ENCODE measurements at regions of chr12 and their contacts with region 1.

Region 1: DNA sequence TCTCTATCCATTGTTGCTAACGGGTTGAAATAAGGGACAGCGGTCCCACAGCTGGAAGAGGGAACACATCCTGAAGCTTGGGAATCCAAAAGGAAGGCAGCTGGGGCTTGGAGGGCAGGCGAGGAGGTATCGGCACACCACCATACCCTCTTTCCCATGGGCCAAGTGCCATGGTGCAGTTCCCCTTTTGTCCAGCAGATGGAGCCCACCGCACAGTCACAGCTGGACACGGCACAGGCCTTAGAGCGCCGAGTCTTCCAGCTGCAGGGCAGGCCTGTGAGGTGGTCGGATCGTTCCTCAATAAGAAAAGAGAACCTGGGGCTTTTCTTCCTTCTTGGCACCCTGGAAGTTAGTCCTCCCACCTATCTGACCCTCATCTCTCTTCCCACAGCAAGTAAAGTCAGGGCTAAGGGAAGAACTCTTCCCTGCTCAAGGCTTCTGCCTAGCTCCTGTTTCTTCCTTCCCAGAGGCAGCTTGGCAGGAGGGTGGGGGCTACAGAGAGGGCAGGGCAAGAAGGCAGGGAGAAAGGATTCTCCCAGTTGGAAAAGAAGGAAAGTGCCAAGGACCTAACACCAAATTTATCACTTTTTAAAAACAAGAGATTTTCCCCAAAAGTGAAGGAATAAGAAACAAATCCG is 8.6 kb downstream of the PPP1R1A start:
- DNase-seq: peak; percentile 63 to 74 (median 68)
- H3K4me3 ChIP-seq: no peak overlapping the region
- H3K4me3 Mint-ChIP-seq: peak overlapping the region in 1 of 8 donors; percentile 44
- H3K27ac ChIP-seq: no peak overlapping the region
- H3K27ac Mint-ChIP-seq: no peak overlapping the region
- H3K4me1 ChIP-seq: peaks cover 7% of the 10 kb centered on the region
- H3K4me1 Mint-ChIP-seq: peaks cover 4 to 7% (median 5%) of the 10 kb centered on the region in 4 donors
- H3K27me3 ChIP-seq: no peaks in the 10 kb centered on the region
- H3K27me3 Mint-ChIP-seq: peaks cover 3 to 12% of the 10 kb centered on the region in 2 donors

Region 2: GRCh38 chr12:54444206-54444605 is 135.6 kb before region 1 on chr12:
- CTCF ChIA-PET with region 1: no interaction called
- POLR2A ChIA-PET with region 1: no interaction called
- intact Hi-C with region 1: no loop called
- DNase-seq: no peak
- H3K4me3 ChIP-seq: no peak overlapping the region
- H3K4me3 Mint-ChIP-seq: no peak overlapping the region
- H3K27ac ChIP-seq: no peak overlapping the region
- H3K27ac Mint-ChIP-seq: no peak overlapping the region
- H3K4me1 ChIP-seq: no peaks in the 10 kb centered on the region
- H3K4me1 Mint-ChIP-seq: peaks cover 3 to 4% (median 4%) of the 10 kb centered on the region in 4 donors
- H3K27me3 ChIP-seq: no peaks in the 10 kb centered on the region
- H3K27me3 Mint-ChIP-seq: peaks cover 0 to 2% of the 10 kb centered on the region in 2 donors

Region 3: DNA sequence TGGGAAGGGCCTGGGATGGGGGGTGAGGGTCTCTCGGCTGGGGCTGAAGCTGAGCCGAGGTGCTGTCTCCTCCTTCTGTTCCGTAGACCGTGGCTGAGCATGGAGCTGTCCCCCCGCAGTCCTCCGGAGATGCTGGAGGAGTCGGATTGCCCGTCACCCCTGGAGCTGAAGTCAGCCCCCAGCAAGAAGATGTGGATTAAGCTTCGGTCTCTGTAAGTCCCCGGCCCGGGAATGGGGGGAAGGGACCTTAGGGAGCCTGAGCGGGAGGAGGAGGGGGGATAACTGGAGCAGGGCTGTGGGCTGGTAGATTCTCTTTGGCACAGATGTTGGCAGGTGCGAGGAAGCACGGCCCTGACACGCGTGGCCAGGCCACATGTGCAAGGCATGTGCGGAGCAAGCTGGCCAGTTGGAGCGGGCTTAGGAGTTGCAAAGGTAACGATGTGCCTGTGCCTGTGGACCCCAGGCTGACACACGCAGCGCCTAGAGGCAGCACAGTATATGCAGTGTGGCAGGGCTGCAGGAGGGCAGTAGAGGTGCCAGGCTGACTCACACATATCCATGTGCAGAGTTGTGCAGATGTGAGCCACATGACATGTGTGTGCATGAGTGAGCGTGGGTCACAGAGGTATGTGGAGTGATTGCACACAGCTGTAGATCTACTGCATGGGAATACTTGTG is 29.9 kb before region 1 on chr12:
- CTCF ChIA-PET with region 1: no interaction called
- POLR2A ChIA-PET with region 1: no interaction called
- intact Hi-C with region 1: no loop called
- DNase-seq: no peak
- H3K4me3 ChIP-seq: peak overlapping the region in 1 of 2 donors; percentile 30
- H3K4me3 Mint-ChIP-seq: peak overlapping the region; percentile 80 to 95 (median 86)
- H3K27ac ChIP-seq: no peak overlapping the region
- H3K27ac Mint-ChIP-seq: peak overlapping the region in 5 of 7 donors; percentile 40 to 77 (median 49)
- H3K4me1 ChIP-seq: peaks cover 15% of the 10 kb centered on the region
- H3K4me1 Mint-ChIP-seq: peaks cover 7 to 35% (median 17%) of the 10 kb centered on the region in 4 donors
- H3K27me3 ChIP-seq: no peaks in the 10 kb centered on the region
- H3K27me3 Mint-ChIP-seq: peaks cover 0 to 2% of the 10 kb centered on the region in 2 donors

Region 4: GRCh38 chr12:54596526-54596946 is 16.7 kb after region 1 on chr12:
- CTCF ChIA-PET with region 1: interaction called, 64 read pairs
- POLR2A ChIA-PET with region 1: no interaction called
- intact Hi-C with region 1: no loop called
- DNase-seq: peak in 4 of 5 donors; percentile 21 to 29 (median 28)
- H3K4me3 ChIP-seq: no peak overlapping the region
- H3K4me3 Mint-ChIP-seq: no peak overlapping the region
- H3K27ac ChIP-seq: no peak overlapping the region
- H3K27ac Mint-ChIP-seq: no peak overlapping the region
- H3K4me1 ChIP-seq: no peaks in the 10 kb centered on the region
- H3K4me1 Mint-ChIP-seq: peaks cover 0 to 5% (median 1%) of the 10 kb centered on the region in 4 donors
- H3K27me3 ChIP-seq: no peaks in the 10 kb centered on the region
- H3K27me3 Mint-ChIP-seq: peaks cover 11 to 20% of the 10 kb centered on the region in 2 donors

Region 5: DNA sequence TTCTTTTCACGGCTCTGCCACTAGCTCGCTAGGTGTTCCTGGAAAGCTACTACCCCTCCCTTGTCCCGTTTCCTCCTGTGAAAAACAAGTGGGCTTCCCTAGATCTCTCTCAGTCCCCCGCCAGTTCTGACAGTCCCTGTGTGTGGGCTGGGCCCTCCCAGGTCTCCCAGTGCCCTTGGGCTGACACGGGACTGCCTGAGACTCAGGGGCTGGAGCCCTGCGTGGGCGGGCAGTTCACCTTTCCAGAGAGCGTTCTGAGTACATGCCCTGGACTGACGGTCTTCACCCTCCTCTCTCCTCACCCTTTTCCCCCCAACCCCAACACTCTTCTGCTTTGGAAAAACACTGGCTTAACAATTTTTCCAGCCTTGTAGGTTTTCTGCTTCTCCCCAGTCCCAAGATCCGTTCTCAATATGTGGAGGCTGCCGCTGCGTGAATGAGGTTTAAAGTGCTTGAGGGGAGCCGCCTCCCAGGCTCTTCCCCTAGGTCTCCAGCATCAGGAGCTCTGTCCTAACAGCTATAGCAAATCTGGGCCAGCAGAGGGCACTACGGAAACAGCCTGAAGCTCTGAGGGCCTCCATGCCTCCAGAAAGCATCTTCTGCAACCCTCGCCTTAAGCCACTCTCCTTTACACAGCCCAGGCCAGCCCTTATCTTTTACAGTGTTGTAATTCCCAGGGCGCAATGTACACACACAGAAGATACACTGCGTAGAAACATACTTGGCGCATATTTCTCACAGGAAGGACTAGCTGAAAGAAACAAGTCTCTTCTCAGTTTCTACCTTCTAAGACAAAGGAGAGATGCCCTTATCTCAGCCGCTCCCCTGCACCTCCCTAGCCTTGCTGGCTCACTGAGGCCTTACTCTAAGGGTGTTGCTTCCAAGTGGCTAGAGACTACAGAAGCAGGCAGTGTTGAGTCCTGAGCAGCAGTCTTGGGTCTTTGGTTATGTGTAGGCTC is 78.8 kb after region 1 on chr12:
- CTCF ChIA-PET with region 1: interaction called, 10 read pairs
- POLR2A ChIA-PET with region 1: no interaction called
- intact Hi-C with region 1: no loop called
- DNase-seq: peak; percentile 13 to 35 (median 26)
- H3K4me3 ChIP-seq: no peak overlapping the region
- H3K4me3 Mint-ChIP-seq: no peak overlapping the region
- H3K27ac ChIP-seq: no peak overlapping the region
- H3K27ac Mint-ChIP-seq: peak overlapping the region in 1 of 7 donors; percentile 64
- H3K4me1 ChIP-seq: no peaks in the 10 kb centered on the region
- H3K4me1 Mint-ChIP-seq: no peaks in the 10 kb centered on the region
- H3K27me3 ChIP-seq: peaks cover 4% of the 10 kb centered on the region
- H3K27me3 Mint-ChIP-seq: peaks cover 9 to 18% of the 10 kb centered on the region in 2 donors

Measured in CD4-positive, alpha-beta memory T cell (primary cell).